ENCODE measurements at regions of chr6 and their contacts with region 1.

Region 1: GRCh38 chr6:166627033-166627874 is at the start of gene RPS6KA2:
- DNase-seq: peak; percentile 99 to 100 (median 100)
- ATAC-seq: peak; percentile 95
- H3K4me3 ChIP-seq: peak within 1 kb of the TSS; percentile 91
- H3K4me3 Mint-ChIP-seq: peak within 1 kb of the TSS; percentile 83 to 98 (median 91)
- H3K27ac ChIP-seq: peak within 1 kb of the TSS; percentile 66
- H3K27ac Mint-ChIP-seq: peak within 1 kb of the TSS; percentile 60 to 96 (median 90)
- H3K4me1 ChIP-seq: peaks cover 6 to 16% of the 10 kb centered on the region in 2 donors
- H3K4me1 Mint-ChIP-seq: peaks cover 8 to 30% (median 14%) of the 10 kb centered on the region in 7 donors
- H3K27me3 ChIP-seq: no peaks in the 10 kb centered on the region
- H3K27me3 Mint-ChIP-seq: peaks cover 0 to 60% (median 18%) of the 10 kb centered on the region in 5 donors
- total RNA-seq, gene RPS6KA2: 4.5 to 17.1 (median 6.6) TPM

Region 2: GRCh38 chr6:166342349-166343149 is 284.7 kb before region 1 on chr6 and contains the start of gene SFT2D1:
- CTCF ChIA-PET with region 1: no interaction called
- POLR2A ChIA-PET with region 1: interaction called, 3 read pairs
- intact Hi-C with region 1: loop called (anchors 1 to 2 kb)
- DNase-seq: peak; percentile 33 to 87 (median 47)
- ATAC-seq: peak; percentile 88
- H3K4me3 ChIP-seq: peak within 1 kb of the TSS; percentile 94
- H3K4me3 Mint-ChIP-seq: peak within 1 kb of the TSS in 8 of 10 donors; percentile 83 to 94 (median 90)
- H3K27ac ChIP-seq: peak within 1 kb of the TSS; percentile 79
- H3K27ac Mint-ChIP-seq: peak within 1 kb of the TSS; percentile 72 to 95 (median 84)
- H3K4me1 ChIP-seq: peaks cover 32 to 37% of the 10 kb centered on the region in 2 donors
- H3K4me1 Mint-ChIP-seq: peaks cover 4 to 18% (median 8%) of the 10 kb centered on the region in 7 donors
- H3K27me3 ChIP-seq: no peaks in the 10 kb centered on the region
- H3K27me3 Mint-ChIP-seq: peaks cover 0 to 10% (median 0%) of the 10 kb centered on the region in 5 donors
- total RNA-seq, gene SFT2D1: 18.3 to 50.1 (median 33.7) TPM

Region 3: GRCh38 chr6:166488076-166488685 is 139.1 kb before region 1 on chr6:
- CTCF ChIA-PET with region 1: interaction called, 3 read pairs
- POLR2A ChIA-PET with region 1: interaction called, 15 read pairs
- intact Hi-C with region 1: loop called (anchors 1 kb)
- DNase-seq: peak; percentile 37 to 90 (median 86)
- ATAC-seq: peak; percentile 94
- H3K4me3 ChIP-seq: peak overlapping the region; percentile 20
- H3K4me3 Mint-ChIP-seq: peak overlapping the region; percentile 43 to 84 (median 78)
- H3K27ac ChIP-seq: peak overlapping the region; percentile 79
- H3K27ac Mint-ChIP-seq: peak overlapping the region; percentile 93 to 98 (median 96)
- H3K4me1 ChIP-seq: peaks cover 17 to 18% of the 10 kb centered on the region in 2 donors
- H3K4me1 Mint-ChIP-seq: peaks cover 9 to 35% (median 27%) of the 10 kb centered on the region in 7 donors
- H3K27me3 ChIP-seq: no peaks in the 10 kb centered on the region
- H3K27me3 Mint-ChIP-seq: no peaks in the 10 kb centered on the region

Region 4: DNA sequence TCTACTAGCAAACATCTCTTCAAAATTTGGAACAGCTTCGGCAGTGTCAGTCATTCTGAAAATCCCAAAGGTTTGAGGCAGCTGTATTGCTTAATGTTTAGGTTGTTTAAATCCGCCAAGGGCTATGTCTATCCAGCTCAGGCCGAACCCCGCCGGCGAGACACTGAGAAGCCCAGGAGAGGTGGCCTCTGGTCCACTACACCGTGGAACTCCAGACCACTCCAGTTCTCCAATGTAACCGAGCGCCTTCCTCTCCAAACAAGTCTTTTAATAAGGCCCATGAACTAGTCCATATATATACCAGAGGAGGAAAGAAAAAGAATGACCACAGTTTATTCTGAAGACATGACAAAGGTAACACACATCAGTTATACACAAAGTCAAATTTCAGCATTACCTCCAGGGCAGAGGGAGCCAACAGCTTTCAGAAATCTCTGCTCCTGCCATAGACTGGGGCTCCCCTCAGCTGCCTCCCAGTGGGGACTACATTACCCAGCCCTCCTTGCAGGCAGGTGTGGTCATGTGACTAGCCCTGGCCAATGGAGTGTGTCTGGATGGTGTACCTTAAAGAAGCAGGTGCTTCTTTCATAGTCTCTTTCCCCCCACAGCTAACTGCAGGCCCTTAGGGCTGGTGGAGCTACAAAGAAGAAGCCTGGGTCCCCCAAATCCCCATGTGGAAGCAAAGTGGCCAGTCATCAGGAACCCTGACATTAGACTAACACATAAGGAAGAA is 40.7 kb before region 1 on chr6 and contains the start of gene RAMACL:
- CTCF ChIA-PET with region 1: no interaction called
- POLR2A ChIA-PET with region 1: no interaction called
- intact Hi-C with region 1: loop called (anchors 1 to 2 kb)
- DNase-seq: peak in 8 of 9 donors; percentile 28 to 61 (median 40)
- ATAC-seq: peak; percentile 86
- H3K4me3 ChIP-seq: no peak within 1 kb of the TSS
- H3K4me3 Mint-ChIP-seq: no peak within 1 kb of the TSS
- H3K27ac ChIP-seq: no peak within 1 kb of the TSS
- H3K27ac Mint-ChIP-seq: no peak within 1 kb of the TSS
- H3K4me1 ChIP-seq: peaks cover 0 to 5% of the 10 kb centered on the region in 2 donors
- H3K4me1 Mint-ChIP-seq: peaks cover 0 to 18% (median 12%) of the 10 kb centered on the region in 7 donors
- H3K27me3 ChIP-seq: no peaks in the 10 kb centered on the region
- H3K27me3 Mint-ChIP-seq: no peaks in the 10 kb centered on the region
- total RNA-seq, gene RAMACL: 0.43 to 1.2 (median 0.78) TPM

Region 5: DNA sequence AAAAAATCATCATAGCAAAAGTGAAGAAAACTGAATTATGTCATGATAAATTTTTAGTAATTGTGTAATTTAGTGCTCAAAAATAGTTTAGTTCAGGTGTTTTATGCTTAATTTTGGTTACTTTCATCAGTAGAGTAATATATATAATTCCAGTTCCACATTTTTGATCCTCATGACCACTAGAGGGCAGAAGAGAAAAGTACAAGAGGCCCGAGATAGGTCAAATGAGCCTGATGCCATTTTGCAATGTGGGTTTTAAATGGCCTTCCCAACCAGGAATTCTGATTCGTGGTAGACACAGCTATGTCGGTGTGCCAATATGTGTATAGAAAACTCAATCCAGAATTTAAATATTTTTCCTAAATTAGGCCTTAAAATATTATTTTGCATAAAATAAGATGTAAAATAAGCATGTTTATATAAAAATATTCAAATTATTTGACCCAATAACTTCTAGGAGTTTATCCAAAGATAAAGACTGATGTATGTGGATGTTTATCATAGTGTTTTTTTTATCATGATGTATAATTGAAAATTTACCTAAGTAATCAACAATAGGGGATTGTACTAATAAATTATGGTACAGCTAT is 159.5 kb after region 1 on chr6:
- CTCF ChIA-PET with region 1: no interaction called
- POLR2A ChIA-PET with region 1: no interaction called
- intact Hi-C with region 1: loop called in 1 of 2 experiments (anchors 5 kb)
- DNase-seq: peak in 7 of 9 donors; percentile 42 to 70 (median 59)
- ATAC-seq: peak; percentile 78
- H3K4me3 ChIP-seq: no peak overlapping the region
- H3K4me3 Mint-ChIP-seq: no peak overlapping the region
- H3K27ac ChIP-seq: no peak overlapping the region
- H3K27ac Mint-ChIP-seq: no peak overlapping the region
- H3K4me1 ChIP-seq: no peaks in the 10 kb centered on the region
- H3K4me1 Mint-ChIP-seq: no peaks in the 10 kb centered on the region
- H3K27me3 ChIP-seq: no peaks in the 10 kb centered on the region
- H3K27me3 Mint-ChIP-seq: peaks cover 0 to 13% (median 0%) of the 10 kb centered on the region in 5 donors

Region 6: GRCh38 chr6:166999145-166999883 is 372.1 kb after region 1 on chr6 and contains the start of gene CEP43:
- CTCF ChIA-PET with region 1: no interaction called
- POLR2A ChIA-PET with region 1: no interaction called
- intact Hi-C with region 1: loop called (anchors 1 kb)
- DNase-seq: peak; percentile 64 to 93 (median 81)
- ATAC-seq: peak; percentile 94
- H3K4me3 ChIP-seq: peak within 1 kb of the TSS; percentile 83
- H3K4me3 Mint-ChIP-seq: peak within 1 kb of the TSS; percentile 85 to 95 (median 88)
- H3K27ac ChIP-seq: peak within 1 kb of the TSS; percentile 78
- H3K27ac Mint-ChIP-seq: peak within 1 kb of the TSS; percentile 61 to 95 (median 81)
- H3K4me1 ChIP-seq: peaks cover 16% of the 10 kb centered on the region in 2 donors
- H3K4me1 Mint-ChIP-seq: peaks cover 28 to 38% (median 30%) of the 10 kb centered on the region in 7 donors
- H3K27me3 ChIP-seq: no peaks in the 10 kb centered on the region
- H3K27me3 Mint-ChIP-seq: no peaks in the 10 kb centered on the region
- total RNA-seq, gene CEP43: 11.5 to 17.6 (median 15.5) TPM